BJ (cell line): ENCODE measurements at regions of chr9 and their contacts with region 1.

Region 1: GRCh38 chr9:35732122-35732799 is at the starts of genes CREB3 and TLN1:
- DNase-seq: peak; percentile 96
- H3K4me3 ChIP-seq: peak within 1 kb of the TSS; percentile 83
- H3K27me3 ChIP-seq: no peaks in the 10 kb centered on the region
- CTCF ChIP-seq: no peak
- polyA plus RNA-seq, gene CREB3: 67.9 and 75.8 TPM in 2 replicates
- polyA plus RNA-seq, gene TLN1: 215 and 399 TPM in 2 replicates

Region 2: GRCh38 chr9:35071814-35072460 is 660.3 kb before region 1 on chr9:
- CTCF ChIA-PET with region 1: no interaction called
- POLR2A ChIA-PET with region 1: interaction called, 13 read pairs
- DNase-seq: no peak
- H3K4me3 ChIP-seq: peak overlapping the region; percentile 65
- H3K27me3 ChIP-seq: no peaks in the 10 kb centered on the region
- CTCF ChIP-seq: peak; percentile 24; the same call in 1 of the 2 replicates

Region 3: GRCh38 chr9:35448496-35448895 is 283.8 kb before region 1 on chr9:
- CTCF ChIA-PET with region 1: no interaction called
- POLR2A ChIA-PET with region 1: no interaction called
- DNase-seq: no peak
- H3K4me3 ChIP-seq: no peak overlapping the region
- H3K27me3 ChIP-seq: peaks cover 12% of the 10 kb centered on the region
- CTCF ChIP-seq: no peak

Region 4: DNA sequence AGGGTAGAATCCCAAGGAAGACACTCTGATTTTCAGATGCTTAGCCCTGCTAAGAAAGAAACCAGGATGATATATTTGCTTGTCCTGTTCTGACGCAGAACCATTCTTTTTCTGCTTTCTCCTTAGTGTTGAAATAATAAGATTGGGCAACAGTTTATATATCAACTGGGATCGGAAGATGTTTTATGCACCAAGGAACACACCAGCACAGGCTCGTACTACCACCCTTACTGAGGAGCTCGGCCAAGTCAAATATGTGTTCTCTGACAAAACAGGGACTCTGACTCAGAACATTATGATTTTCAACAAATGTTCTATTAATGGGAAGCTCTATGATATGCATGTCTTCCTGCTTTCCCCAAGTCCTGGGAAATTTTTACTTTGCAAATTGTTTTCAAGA is 261.4 kb before region 1 on chr9:
- CTCF ChIA-PET with region 1: no interaction called
- POLR2A ChIA-PET with region 1: no interaction called
- DNase-seq: no peak
- H3K4me3 ChIP-seq: no peak overlapping the region
- H3K27me3 ChIP-seq: peaks cover 1% of the 10 kb centered on the region
- CTCF ChIP-seq: no peak

Region 5: GRCh38 chr9:35646533-35647265 is 85.6 kb before region 1 on chr9:
- CTCF ChIA-PET with region 1: interaction called, 16 read pairs
- POLR2A ChIA-PET with region 1: interaction called, 5 read pairs
- DNase-seq: no peak
- H3K4me3 ChIP-seq: peak overlapping the region; percentile 48
- H3K27me3 ChIP-seq: no peaks in the 10 kb centered on the region
- CTCF ChIP-seq: peak; percentile 95

Region 6: GRCh38 chr9:35690431-35691333 is 41.6 kb before region 1 on chr9:
- CTCF ChIA-PET with region 1: interaction called, 116 read pairs
- POLR2A ChIA-PET with region 1: interaction called, 35 read pairs
- DNase-seq: peak; percentile 26
- H3K4me3 ChIP-seq: peak overlapping the region; percentile 98
- H3K27me3 ChIP-seq: no peaks in the 10 kb centered on the region
- CTCF ChIP-seq: no peak

Region 7: GRCh38 chr9:35716230-35716629 is 16.0 kb before region 1 on chr9:
- CTCF ChIA-PET with region 1: interaction called, 36 read pairs
- POLR2A ChIA-PET with region 1: interaction called, 3 read pairs
- DNase-seq: no peak
- H3K4me3 ChIP-seq: no peak overlapping the region
- H3K27me3 ChIP-seq: no peaks in the 10 kb centered on the region
- CTCF ChIP-seq: no peak